ENCODE measurements at regions of chr15 and their contacts with region 1.

Region 1: DNA sequence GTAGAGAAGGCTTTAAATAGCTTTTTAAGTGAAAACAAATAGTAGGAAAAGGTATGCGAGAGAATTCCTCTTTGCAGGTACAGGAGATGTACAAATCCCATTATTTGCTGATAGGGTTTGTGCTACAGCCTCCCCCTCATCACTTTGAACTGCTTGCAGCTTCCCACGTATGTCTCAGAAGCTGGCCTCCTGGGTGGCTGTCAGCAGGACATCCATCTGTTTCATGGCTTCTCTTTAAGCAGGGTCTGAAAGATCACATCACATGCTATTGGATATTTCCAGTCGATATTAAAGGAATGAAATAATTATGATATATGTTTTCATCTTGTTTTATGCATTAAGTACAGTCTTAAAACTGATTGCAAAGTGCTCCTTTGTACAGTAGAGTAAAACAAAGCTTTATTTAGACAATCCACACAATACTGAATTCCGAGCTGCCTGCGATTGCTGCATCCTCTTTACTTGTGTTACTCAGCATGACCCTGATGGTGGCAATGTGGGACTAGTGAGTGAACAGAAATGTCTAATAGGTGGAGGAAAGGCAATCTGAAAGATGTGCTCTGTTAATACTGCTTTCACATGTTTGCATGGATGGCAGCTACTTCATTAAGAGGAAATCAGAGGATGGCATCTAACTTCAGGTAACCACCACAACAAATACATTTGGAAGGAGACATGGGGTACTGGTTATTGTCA is 930.6 kb upstream of the SEMA6D start:
- DNase-seq: no peak
- ATAC-seq: peak; percentile 71

Region 2: DNA sequence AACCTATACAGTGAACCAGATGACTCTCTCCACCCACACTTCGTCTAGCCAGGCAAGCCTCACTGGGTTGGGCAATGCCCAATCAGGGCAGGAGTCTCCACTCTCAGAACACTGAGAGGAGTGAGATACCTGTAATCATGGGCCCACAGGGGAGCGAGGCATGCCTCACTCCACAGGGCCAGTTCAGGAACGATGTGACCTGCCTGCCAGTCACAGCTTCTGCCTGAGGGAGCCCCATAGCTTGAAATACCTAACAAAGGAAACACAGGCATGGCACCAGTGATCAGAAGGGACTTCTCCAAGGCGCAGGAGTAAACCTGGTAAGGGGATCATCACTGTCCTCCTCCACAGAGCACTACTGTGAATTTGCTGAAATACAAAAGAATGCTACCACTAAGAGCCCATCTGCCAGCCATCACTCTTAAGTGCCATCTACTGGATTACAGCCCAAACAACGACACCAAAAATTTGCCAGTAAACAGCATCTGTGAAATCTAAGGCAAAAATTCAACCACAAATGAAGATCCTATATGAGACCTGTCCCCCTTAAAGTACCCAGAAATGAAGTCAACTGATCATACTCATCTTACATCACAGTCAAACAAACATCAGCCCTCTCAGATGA is 240.7 kb after region 1 on chr15:
- intact Hi-C with region 1: loop called (anchors 10 kb)
- DNase-seq: no peak
- ATAC-seq: no peak